Ascending aorta (tissue), 2 donors: ENCODE measurements at regions of chr1 and their contacts with region 1.

Region 1: GRCh38 chr1:201895913-201896807 is 7.5 kb downstream of the SHISA4 start:
- DNase-seq: peak; percentile 69 to 96
- H3K4me3 ChIP-seq: no peak overlapping the region
- H3K27ac ChIP-seq: peak overlapping the region; percentile 87 to 94
- H3K4me1 ChIP-seq: peaks cover 42 to 69% of the 10 kb centered on the region in 2 donors
- H3K27me3 ChIP-seq: no peaks in the 10 kb centered on the region
- CTCF ChIP-seq: peak; percentile 90 to 97 (median 94)

Region 2: GRCh38 chr1:201582705-201583442 is 313.3 kb before region 1 on chr1:
- intact Hi-C with region 1: no loop called
- DNase-seq: peak in 1 of 2 donors; percentile 49
- H3K4me3 ChIP-seq: no peak overlapping the region
- H3K27ac ChIP-seq: no peak overlapping the region
- H3K4me1 ChIP-seq: no peaks in the 10 kb centered on the region
- H3K27me3 ChIP-seq: no peaks in the 10 kb centered on the region
- CTCF ChIP-seq: no peak

Region 3: DNA sequence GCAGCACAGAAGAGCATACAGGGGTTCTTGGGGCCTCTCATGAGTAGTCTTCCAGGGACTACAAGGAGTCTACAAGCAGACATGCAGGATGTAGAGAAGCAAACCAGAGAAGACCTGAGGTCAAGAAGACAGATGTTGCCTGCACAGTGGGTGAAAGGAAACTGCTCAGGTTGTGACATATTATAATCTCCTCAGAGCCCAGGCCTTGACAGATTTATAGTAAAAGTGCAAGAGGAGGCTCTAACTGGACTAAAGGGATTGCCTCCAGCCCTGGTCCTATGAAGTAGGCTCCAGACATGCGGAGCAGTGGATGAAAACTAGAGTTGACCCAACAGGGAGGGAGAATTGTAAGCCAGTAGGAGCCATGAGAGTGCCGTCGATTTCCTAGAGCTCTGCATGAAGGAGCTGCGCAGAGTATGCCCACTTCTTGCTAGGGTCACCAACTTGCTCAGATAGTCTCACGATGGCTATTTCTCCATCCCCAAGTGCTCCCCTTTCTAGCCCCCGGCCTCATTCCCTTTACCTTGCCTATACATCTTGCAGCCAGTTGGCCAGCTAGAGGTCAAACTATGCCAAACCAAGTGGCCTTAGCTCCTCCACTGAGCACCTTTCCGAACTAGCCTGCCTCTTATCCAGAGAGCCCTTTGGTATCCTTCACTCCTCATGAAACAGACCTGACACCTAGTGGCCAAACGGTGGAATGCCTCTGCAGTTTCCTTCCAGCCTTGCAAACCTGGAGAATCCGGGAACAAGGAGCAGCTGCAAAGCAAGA is 103.4 kb before region 1 on chr1:
- intact Hi-C with region 1: no loop called
- DNase-seq: peak in 1 of 2 donors; percentile 91
- H3K4me3 ChIP-seq: no peak overlapping the region
- H3K27ac ChIP-seq: peak overlapping the region; percentile 87 to 88
- H3K4me1 ChIP-seq: peaks cover 23 to 40% of the 10 kb centered on the region in 2 donors
- H3K27me3 ChIP-seq: no peaks in the 10 kb centered on the region
- CTCF ChIP-seq: peak; percentile 93 to 98 (median 95)

Region 4: GRCh38 chr1:201877877-201878401 is 18.2 kb before region 1 on chr1:
- intact Hi-C with region 1: loop called (anchors 1 kb)
- DNase-seq: peak in 1 of 2 donors; percentile 76
- H3K4me3 ChIP-seq: no peak overlapping the region
- H3K27ac ChIP-seq: peak overlapping the region; percentile 46 to 65
- H3K4me1 ChIP-seq: peaks cover 3 to 12% of the 10 kb centered on the region in 2 donors
- H3K27me3 ChIP-seq: no peaks in the 10 kb centered on the region
- CTCF ChIP-seq: peak; percentile 46 to 79 (median 68)

Region 5: GRCh38 chr1:201946224-201946908 is 50.2 kb after region 1 on chr1 and contains the start of gene LMOD1:
- intact Hi-C with region 1: loop called (anchors 1 kb)
- DNase-seq: peak; percentile 89 to 99
- H3K4me3 ChIP-seq: peak within 1 kb of the TSS; percentile 72 to 91
- H3K27ac ChIP-seq: peak within 1 kb of the TSS; percentile 93 to 97
- H3K4me1 ChIP-seq: peaks cover 3 to 23% of the 10 kb centered on the region in 2 donors
- H3K27me3 ChIP-seq: no peaks in the 10 kb centered on the region
- CTCF ChIP-seq: no peak
- total RNA-seq, gene LMOD1: 316 TPM